Ascending aorta (tissue), 2 donors: ENCODE measurements at regions of chr13 and their contacts with region 1.

Region 1: GRCh38 chr13:45370922-45371406 is 30.0 kb upstream of the TPT1 start:
- DNase-seq: peak in 1 of 2 donors; percentile 79
- H3K4me3 ChIP-seq: peak overlapping the region in 1 of 2 donors; percentile 10
- H3K27ac ChIP-seq: no peak overlapping the region
- H3K4me1 ChIP-seq: peaks cover 0 to 5% of the 10 kb centered on the region in 2 donors
- H3K27me3 ChIP-seq: no peaks in the 10 kb centered on the region
- CTCF ChIP-seq: peak; percentile 67 to 95 (median 95)

Region 2: DNA sequence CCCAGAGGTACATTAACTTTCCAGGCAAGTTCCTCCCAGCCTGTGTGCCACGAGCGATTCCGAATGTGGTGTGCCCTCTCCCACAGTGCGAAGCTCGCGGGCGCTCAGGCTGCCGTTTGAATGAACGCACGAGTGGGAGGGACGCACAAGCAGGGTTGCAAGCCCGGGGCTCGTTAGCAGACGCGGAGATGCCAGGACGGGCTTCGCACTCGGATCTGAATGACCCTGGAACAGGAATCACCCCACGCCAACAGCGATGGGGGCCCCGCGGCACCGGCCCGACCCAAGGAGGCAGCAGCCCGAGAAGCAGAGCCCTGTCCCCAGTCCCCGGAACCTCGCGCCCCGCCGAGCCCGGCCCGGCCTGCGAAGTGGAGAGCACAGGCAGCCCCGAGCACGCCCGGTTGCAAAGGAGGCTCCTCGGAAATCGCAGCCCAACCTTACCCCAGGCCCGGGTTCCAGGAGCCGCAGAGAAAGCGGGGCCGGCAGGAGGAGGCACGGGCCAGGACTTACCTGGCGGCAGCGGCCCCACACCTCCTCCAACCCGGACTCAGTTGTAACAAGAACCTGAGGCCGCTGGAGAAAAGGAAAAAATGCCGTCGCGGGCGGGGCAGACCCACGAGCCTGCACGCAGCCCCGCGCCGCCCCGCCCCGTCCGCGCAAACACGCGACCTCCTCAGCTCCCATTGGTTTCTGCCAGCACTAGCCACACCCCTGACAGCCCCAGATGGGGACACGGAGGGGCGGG is 47.0 kb after region 1 on chr13 and contains the start of gene SLC25A30:
- intact Hi-C with region 1: loop called (anchors 5 kb)
- DNase-seq: peak; percentile 87 to 97
- H3K4me3 ChIP-seq: peak within 1 kb of the TSS; percentile 70 to 80
- H3K27ac ChIP-seq: peak within 1 kb of the TSS; percentile 83 to 85
- H3K4me1 ChIP-seq: peaks cover 0 to 7% of the 10 kb centered on the region in 2 donors
- H3K27me3 ChIP-seq: no peaks in the 10 kb centered on the region
- CTCF ChIP-seq: no peak
- total RNA-seq, gene SLC25A30: 1.9 TPM

Region 3: DNA sequence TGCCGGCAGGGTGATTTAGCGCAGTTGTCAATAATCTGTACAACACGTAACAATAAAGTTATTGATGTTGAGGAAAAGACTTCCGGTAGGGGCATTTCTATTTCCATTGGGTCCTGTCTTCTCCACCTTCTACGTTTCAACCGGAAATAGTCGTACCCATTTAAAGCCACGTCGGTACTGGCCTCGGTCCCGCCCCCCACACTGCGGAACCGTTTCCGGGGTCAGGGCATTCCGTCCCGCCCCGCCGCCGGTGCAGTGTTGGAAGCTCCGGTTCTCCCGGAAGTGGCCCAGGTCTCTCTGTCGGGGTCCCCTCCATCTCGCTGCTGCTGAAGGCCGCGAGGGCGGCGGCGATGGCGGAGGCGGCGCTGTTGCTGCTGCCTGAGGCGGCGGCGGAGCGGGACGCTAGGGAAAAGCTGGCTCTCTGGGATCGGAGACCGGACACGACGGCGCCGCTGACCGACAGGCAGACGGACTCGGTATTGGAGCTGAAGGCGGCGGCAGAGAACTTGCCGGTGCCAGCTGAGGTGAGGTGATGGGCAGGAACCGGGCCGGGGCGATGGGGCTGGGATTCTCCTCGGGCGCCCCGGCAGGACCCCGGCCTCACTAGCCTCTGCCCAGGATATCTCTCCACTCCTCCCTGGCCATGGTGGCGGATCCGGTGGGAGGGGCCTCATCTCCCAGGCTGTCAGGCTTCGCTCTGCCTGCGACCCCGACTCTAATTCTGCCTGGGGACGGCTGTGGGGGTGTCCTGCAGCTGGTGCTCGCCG is 93.9 kb after region 1 on chr13 and contains the start of gene COG3:
- intact Hi-C with region 1: loop called (anchors 2 kb)
- DNase-seq: peak; percentile 80 to 97
- H3K4me3 ChIP-seq: peak within 1 kb of the TSS; percentile 63 to 94
- H3K27ac ChIP-seq: peak within 1 kb of the TSS; percentile 90 to 93
- H3K4me1 ChIP-seq: peaks cover 3 to 18% of the 10 kb centered on the region in 2 donors
- H3K27me3 ChIP-seq: no peaks in the 10 kb centered on the region
- CTCF ChIP-seq: peak in 1 of 3 experiments; percentile 37
- total RNA-seq, gene COG3: 5.7 TPM

Region 4: DNA sequence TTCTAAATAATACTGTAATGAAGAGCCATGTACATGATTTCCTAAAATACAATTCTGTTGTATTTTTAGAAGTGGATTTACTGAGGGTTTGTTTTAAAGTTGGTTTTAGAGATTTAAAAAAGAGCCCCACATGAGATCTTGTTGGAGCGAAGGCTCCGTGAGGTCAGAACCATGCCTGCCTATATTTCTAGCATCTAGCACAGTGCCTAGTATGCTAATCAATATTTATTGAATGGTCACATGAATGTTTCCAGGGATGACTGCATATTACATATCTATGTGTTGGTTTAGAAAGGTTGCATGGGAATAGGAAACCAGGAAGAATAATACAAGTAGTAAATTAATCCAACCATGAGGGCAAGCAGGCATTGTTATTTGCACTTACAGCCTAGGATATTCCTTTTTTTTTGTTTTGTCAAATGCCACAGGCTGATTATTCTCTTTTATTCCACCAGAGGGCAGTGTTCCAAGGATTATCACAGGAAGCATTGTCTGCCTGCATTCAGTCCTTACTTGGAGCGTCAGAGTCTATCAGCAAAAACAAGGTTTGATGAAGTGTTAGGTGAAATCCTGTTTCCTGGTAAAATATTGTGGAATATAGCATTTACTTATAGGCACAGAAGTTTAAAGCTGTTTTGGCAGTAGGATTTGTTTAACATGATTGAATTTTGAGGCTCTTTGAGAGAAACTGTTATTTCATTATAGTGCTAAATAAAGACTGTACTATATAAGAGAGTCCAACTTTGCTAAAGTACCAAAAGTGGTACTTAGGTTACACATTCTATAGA is 140.5 kb after region 1 on chr13:
- intact Hi-C with region 1: loop called (anchors 5 kb)
- DNase-seq: no peak
- H3K4me3 ChIP-seq: no peak overlapping the region
- H3K27ac ChIP-seq: peak overlapping the region in 1 of 2 donors; percentile 43
- H3K4me1 ChIP-seq: no peaks in the 10 kb centered on the region
- H3K27me3 ChIP-seq: no peaks in the 10 kb centered on the region
- CTCF ChIP-seq: peak; percentile 70 to 77 (median 74)

Region 5: GRCh38 chr13:46160471-46161066 is 789.6 kb after region 1 on chr13:
- intact Hi-C with region 1: loop called (anchors 10 kb)
- DNase-seq: no peak
- H3K4me3 ChIP-seq: no peak overlapping the region
- H3K27ac ChIP-seq: no peak overlapping the region
- H3K4me1 ChIP-seq: no peaks in the 10 kb centered on the region
- H3K27me3 ChIP-seq: no peaks in the 10 kb centered on the region
- CTCF ChIP-seq: peak; percentile 41 to 74 (median 60)